Right ventricle myocardium inferior (tissue), 1 donor: ENCODE measurements at regions of chr4 and their contacts with region 1.

Region 1: DNA sequence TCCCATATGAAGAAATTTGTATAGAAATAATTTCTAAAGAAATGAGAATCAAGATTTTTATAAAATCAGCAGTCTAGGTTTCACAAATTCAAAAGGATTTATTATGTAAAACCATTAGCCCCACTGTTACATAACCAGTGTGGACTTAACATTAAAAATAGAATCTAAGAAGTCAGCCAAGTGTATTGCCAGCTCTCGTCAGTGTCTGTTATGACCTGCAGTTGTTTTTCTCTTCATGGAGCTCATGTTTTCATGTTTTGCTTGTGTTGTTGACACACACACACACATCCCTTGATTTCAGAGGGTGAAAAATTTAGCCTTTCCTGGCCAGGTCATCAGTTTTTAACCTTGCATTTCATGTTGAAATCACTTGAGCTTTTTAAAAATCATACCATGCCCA is 39.5 kb downstream of the USP38 start:
- DNase-seq: no peak
- ATAC-seq: peak; percentile 74

Region 2: GRCh38 chr4:143270256-143270838 is 46.1 kb after region 1 on chr4:
- intact Hi-C with region 1: loop called (anchors 10 kb)
- DNase-seq: no peak
- ATAC-seq: peak; percentile 77

Region 3: DNA sequence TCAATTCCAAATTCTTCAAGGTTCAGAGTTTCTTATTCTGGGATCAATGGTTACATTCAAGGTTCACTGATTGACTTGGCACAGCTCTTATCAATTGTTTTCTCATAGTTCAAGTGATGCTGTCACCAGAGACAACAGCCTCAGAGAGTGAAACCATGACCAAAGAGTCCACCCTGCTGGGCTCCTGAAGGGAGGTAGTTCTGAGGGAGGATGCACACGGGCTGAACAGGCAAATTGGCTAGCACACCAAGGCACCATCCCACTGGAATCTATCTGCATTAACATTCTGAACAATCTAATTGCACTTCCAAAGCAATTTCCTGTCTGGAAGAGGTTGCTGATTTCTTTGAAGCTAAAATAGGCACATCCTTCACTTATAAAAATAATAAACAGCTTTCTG is 95.9 kb after region 1 on chr4:
- intact Hi-C with region 1: no loop called
- DNase-seq: no peak
- ATAC-seq: no peak